GM10248 (cell line): ENCODE measurements at regions of chr10 and their contacts with region 1.

Region 1: DNA sequence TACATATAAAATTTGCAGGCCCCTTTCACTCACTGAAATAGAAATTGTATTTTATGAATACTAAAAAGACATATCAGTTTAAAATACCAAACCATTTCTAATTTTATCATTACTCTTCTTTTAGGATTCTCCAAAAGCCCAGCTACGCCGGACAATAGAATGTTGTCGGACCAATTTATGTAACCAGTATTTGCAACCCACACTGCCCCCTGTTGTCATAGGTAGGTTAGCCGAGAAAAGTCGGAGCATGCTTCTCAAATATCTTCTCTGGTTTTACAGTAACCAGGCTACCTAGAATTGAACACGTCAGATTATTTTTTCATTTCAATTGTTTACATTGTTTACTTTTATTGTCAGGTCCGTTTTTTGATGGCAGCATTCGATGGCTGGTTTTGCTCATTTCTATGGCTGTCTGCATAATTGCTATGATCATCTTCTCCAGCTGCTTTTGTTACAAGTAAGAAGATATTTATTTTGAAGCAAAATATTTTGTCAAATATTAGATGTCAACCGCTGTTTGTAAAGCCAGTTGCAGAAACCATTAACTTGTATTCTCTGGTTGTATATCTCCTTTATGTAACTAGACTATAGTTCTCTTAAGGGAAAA is 57.6 kb downstream of the MMRN2 start:
- DNase-seq: peak; percentile 56
- CTCF ChIP-seq: peak; percentile 66

Region 2: GRCh38 chr10:86688398-86688921 is 211.3 kb before region 1 on chr10:
- CTCF ChIA-PET with region 1: interaction called, 61 read pairs
- POLR2A ChIA-PET with region 1: no interaction called
- DNase-seq: peak; percentile 85
- CTCF ChIP-seq: peak; percentile 82

Region 3: DNA sequence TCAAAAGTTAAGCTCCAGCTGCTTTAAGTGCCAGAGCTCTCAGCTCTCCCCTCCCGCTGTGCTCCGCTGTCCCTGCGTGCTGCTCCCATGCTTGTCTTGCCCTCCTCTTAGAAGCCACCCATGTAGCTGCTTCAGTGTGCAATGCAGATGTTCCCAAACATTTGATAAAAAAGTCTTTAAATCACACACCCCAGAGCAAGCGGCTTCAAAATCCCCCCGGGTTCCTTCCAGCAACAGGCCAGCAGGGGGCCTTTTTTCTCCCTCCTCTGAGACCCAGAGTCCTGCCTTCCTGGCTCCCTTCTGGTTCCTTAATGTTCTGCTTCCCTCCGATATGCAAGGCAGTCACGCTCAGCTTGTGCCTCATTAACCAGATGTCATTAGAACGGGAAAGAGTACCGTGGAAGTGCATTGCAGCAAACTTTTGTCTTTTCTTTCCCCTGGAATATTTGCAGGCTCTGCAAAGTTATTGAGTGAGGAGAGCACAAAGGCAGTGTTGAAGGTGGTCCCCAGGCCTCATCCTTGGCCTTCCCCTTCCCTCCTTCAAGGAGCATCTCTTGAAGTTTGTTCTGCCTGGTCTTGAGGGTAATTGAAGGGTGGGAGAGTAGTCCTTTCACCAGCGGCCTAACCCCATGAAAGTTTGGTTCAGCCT is 205.9 kb before region 1 on chr10:
- CTCF ChIA-PET with region 1: interaction called, 61 read pairs
- POLR2A ChIA-PET with region 1: no interaction called
- DNase-seq: peak; percentile 57
- CTCF ChIP-seq: peak; percentile 48

Region 4: GRCh38 chr10:86710987-86711512 is 188.7 kb before region 1 on chr10:
- CTCF ChIA-PET with region 1: interaction called, 37 read pairs
- POLR2A ChIA-PET with region 1: interaction called, 7 read pairs
- DNase-seq: peak; percentile 95
- CTCF ChIP-seq: peak; percentile 88

Region 5: GRCh38 chr10:86888585-86889381 is 11.0 kb before region 1 on chr10:
- CTCF ChIA-PET with region 1: interaction called, 16 read pairs
- POLR2A ChIA-PET with region 1: no interaction called
- DNase-seq: peak; percentile 80
- CTCF ChIP-seq: no peak